Spleen (tissue), 13 donors: ENCODE measurements at regions of chr2 and their contacts with region 1.

Region 1: DNA sequence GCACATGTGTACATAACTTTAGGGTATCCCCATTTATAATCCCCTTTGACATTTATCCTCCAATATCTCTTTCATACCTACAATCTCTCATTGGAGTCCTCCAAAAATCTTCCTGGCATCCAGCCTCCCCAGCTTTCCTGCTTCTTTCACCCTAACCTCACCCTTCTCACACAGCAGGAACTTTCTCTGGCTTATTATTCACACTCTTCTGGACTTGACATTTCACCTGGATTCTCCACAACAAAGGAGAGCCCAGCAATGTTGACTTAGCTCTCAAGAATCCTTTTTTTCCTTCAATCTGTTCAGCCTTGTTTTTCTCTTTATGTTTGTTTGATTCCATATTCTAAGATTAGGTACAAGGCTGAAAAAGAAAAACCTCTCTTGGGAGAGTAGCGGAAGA is 783.6 kb upstream of the ACVR2A start:
- DNase-seq: no peak
- H3K4me3 ChIP-seq: no peak overlapping the region
- H3K27ac ChIP-seq: no peak overlapping the region
- H3K4me1 ChIP-seq: no peaks in the 10 kb centered on the region
- H3K27me3 ChIP-seq: no peaks in the 10 kb centered on the region
- CTCF ChIP-seq: no peak
- POLR2A ChIP-seq: no peak

Region 2: GRCh38 chr2:147025646-147026585 is 35.4 kb before region 1 on chr2:
- intact Hi-C with region 1: loop called (anchors 2 kb)
- DNase-seq: no peak
- H3K4me3 ChIP-seq: no peak overlapping the region
- H3K27ac ChIP-seq: peak overlapping the region in 7 of 8 donors; percentile 43 to 68 (median 49)
- H3K4me1 ChIP-seq: peaks cover 0 to 4% (median 0%) of the 10 kb centered on the region in 6 donors
- H3K27me3 ChIP-seq: peaks cover 0 to 2% (median 0%) of the 10 kb centered on the region in 7 donors
- CTCF ChIP-seq: no peak
- POLR2A ChIP-seq: no peak